ENCODE measurements at regions of chr4 and their contacts with region 1.

Region 1: GRCh38 chr4:12562021-12562420 is 922.1 kb downstream of the RAB28 start:
- DNase-seq: no peak
- H3K4me3 ChIP-seq: no peak overlapping the region
- H3K27ac ChIP-seq: no peak overlapping the region
- H3K4me1 ChIP-seq: no peaks in the 10 kb centered on the region
- H3K27me3 ChIP-seq: no peaks in the 10 kb centered on the region
- CTCF ChIP-seq: no peak
- POLR2A ChIP-seq: no peak

Region 2: DNA sequence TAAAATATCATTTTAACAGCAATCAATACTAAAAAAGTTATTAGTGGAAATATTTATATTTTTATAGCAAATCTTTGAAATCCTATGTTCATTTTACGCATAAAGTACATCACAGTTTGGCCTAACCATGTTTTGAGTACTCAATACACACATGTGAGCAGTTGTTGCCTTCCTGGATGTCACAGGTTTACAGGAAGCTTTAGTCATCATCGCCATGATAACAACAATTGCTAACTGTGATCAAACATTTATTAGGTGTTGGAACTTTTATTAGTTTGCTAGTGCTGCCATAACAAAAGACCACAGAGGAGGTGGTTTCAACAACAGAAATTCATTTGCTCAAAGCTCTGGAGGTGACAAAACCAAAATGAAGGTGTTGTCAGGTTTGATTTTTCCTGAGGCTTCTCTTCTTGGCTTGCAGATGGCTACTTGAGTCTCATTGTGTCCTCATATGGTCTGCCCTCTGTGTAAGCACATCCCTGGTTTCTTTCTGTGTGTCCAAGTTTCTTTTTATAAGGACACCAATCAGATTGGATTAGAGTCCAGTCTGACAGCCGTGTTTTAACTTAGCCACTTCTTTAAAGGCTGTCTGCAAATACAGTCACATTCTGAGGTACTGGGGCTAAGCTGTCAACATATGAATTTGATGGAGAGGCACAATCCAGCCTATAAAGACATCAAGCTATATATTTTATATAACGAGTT is 1108.6 kb after region 1 on chr4:
- intact Hi-C with region 1: loop called (anchors 5 kb)
- DNase-seq: no peak
- H3K4me3 ChIP-seq: no peak overlapping the region
- H3K27ac ChIP-seq: no peak overlapping the region
- H3K4me1 ChIP-seq: no peaks in the 10 kb centered on the region
- H3K27me3 ChIP-seq: no peaks in the 10 kb centered on the region
- CTCF ChIP-seq: no peak
- POLR2A ChIP-seq: no peak